Cardiac septum (tissue), 1 donor: ENCODE measurements at regions of chr1 and their contacts with region 1.

Region 1: DNA sequence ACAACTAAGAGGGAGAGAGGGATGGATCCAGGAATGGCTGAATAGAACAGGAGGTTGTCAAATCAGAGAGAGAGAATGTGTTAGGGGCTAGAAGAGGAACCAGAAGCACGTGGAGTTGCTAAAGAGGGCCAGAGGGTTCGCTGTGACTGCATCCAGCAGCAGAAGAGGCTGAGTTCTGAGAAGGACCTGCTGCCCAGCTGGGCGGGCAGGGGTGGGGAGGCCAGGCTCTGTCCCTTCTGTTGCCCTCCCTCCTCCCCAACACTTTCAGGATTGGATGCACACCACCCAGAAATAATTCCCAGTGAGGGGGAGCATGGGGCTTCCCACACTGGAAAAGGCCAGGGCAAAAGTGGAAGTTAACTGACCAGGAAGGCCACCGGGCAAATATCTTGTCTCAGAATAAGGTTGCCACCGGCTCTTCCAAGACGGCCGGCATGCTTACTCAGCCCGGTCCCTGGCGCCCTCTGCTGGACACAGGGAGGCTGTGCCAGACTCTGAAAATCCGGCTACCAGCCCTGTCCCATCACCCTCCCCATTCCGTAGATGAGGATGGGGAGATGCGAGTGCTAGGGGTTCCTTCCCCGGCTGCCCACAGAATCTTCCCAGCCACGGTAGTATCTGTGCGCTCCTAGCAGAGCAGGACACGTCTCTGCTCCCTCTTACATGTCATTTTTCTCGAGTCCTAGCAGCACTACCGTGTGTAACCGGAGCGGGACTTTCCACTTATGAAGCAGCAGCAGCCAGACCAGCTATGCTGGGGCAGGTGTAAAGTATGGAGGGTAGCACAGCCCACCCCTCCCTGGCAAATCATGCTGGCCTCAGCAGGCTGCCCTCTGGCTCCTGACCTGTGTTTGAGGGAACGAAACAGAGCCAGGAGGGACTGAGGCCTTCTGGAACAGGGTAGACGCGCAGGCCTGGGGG is 46.8 kb upstream of the A3GALT2 start:
- DNase-seq: peak; percentile 96

Region 2: GRCh38 chr1:33127001-33127791 is 240.5 kb before region 1 on chr1:
- intact Hi-C with region 1: loop called (anchors 5 kb)
- DNase-seq: peak; percentile 99

Region 3: DNA sequence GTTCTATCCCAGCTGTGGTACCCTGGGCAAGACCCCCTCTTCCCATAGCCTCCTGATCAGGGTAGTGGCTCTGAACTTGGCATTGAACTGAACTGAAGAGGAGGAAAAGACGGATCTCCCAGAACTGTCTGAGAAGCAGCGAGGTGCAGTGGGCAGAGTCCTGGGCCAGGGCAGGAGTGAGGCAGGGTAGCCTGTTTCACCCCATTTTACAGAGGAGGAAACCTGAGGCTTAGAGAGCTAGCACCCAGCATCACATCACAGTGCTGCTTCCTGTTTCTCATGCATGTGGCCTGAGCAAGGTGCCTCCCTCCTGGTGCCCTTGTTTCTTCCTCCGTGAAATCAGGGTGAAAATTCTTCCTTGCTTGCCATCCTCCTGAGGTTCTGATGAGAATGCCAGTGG is 94.3 kb before region 1 on chr1:
- intact Hi-C with region 1: no loop called
- DNase-seq: peak; percentile 20

Region 4: GRCh38 chr1:33295450-33296081 is 72.2 kb before region 1 on chr1:
- intact Hi-C with region 1: loop called (anchors 1 kb)
- DNase-seq: peak; percentile 93

Region 5: DNA sequence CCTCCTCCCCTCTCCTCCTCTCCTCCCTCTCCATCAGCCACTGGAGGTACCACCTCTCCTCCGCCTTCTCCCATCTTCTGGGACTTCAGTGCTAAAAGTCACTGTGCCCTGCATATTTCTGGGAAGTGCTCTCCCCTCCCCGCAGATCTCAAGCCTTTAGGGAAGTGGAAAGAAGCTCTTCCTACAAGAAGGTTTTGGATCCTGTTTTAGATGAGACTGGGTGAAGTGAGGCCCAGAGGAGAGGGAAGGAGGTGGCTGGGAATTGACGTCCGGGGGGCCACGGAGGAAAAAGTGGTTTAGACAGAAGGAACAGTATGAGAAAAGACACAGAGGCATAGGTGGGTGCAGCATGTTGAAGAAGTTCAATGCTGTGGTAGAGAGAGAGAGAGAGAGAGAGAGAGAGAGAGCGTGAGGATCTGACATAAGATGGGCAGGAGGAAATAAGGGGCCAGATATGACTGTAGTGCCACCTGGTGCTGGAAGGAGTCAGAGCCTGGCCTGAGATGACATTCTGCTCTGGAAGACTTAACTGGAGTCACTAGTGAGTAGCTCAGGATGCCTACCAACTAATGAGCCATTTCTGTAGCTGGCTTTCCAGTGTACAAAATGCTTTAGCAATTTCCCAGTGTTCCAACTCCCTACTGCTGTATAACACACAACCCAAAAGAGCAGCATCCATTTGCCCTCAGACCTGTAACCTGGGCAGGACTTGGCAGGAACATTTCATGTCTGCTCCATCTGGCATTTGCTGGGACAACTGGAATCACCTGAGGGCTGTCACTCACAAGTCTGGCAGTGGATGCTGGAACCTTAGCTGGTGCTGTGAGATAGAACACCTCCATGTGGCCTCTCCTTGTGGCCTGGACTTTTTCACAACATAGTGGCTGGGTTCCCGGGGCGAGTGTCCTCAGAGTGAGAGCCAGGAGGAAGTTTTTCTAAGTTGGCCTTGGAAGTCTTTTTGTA is 88.1 kb after region 1 on chr1:
- intact Hi-C with region 1: loop called (anchors 2 kb)
- DNase-seq: no peak

Region 6: GRCh38 chr1:33606272-33606671 is 238.5 kb after region 1 on chr1:
- intact Hi-C with region 1: loop called (anchors 5 kb)
- DNase-seq: no peak